ENCODE measurements at regions of chr1 and their contacts with region 1.

Region 1: DNA sequence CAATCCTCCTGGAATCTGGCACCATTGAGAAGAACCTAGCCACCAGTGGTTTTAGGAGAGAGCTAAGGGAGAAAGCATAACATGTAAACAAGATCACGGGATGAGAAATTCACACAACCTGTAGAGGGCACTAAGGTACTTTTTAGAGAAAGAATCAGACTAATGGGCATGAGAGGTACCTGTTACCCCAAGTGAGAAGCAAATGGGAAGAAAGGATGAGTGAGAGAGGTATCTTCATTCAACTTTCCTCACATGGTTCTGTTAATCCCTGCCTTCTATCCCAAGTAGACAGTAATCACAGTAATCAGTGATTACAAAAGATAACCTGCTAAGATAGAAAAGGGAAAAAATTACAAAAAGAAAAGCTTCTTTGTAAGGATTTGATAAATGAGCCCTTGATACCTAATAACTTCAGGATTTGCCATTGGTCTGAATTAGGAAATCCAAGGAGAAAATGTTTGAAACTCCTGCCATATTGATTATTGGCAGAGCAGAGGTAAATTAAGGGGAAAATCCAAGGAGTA is 251.1 kb upstream of the ADGRL2 start:
- DNase-seq: peak; percentile 5
- ATAC-seq: peak; percentile 69; the same call in 1 of the 2 replicates
- H3K4me3 ChIP-seq: no peak overlapping the region
- H3K27ac ChIP-seq: no peak overlapping the region
- H3K4me1 ChIP-seq: no peaks in the 10 kb centered on the region
- H3K27me3 ChIP-seq: no peaks in the 10 kb centered on the region
- CTCF ChIP-seq: peak; percentile 54; the same call in 1 of the 2 replicates

Region 2: DNA sequence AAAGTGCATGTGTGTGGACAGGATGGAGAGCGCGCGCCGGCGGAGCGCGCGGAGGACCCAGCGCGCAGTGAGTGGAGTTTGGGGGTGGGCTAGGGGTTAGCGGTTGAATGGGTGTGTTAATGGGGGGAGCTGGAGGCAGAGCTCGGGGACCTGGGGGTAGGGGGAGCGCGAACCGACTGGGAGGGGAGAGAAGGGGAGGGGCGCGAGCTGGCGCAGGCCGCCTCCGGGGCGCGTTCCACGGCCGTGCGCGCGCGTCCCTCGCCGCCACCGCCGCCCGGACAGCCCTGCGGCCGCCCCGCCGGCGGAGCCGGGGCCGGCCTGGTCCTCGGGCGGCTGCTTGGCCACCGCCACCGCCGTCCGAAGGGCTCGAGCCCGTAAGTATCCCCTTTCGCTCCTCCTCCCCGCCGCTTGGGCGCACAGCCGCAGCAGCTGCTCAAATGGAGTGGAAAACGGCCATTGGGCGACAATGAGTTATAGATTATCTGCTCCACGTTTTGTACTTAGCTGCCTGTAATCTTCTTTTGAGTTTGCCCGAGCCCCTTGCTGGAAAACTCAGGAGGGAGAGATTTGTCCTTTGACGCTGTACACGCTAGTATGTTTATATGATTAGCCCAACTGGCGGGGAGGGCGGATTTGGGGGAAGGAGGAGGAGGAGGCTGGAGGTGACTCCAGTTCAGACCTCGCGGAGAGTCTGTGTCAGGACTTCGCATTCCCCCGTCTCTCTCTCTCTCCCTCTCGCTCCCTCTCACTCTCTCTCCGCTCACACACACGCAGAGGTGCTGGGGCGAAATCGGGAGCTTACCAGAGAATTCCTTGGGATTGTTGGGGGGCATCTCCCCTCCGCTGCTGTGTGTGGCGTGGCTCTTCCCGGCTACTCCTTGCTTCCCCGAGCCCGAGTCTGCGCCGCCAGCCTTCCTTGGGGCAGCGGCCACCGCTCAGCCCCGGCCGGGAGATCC is 251.3 kb after region 1 on chr1 and contains the start of gene ADGRL2:
- CTCF ChIA-PET with region 1: interaction called, 4 read pairs
- POLR2A ChIA-PET with region 1: no interaction called
- in situ Hi-C with region 1: no loop called
- intact Hi-C with region 1: loop called (anchors 2 kb)
- DNase-seq: peak; percentile 10
- ATAC-seq: peak; percentile 87
- H3K4me3 ChIP-seq: peak within 1 kb of the TSS; percentile 66 to 73
- H3K27ac ChIP-seq: peak within 1 kb of the TSS; percentile 85
- H3K4me1 ChIP-seq: peaks cover 9% of the 10 kb centered on the region
- H3K27me3 ChIP-seq: no peaks in the 10 kb centered on the region
- CTCF ChIP-seq: no peak
- total RNA-seq, gene ADGRL2: 34.2 TPM